ENCODE measurements at regions of chr13 and their contacts with region 1.

Region 1: DNA sequence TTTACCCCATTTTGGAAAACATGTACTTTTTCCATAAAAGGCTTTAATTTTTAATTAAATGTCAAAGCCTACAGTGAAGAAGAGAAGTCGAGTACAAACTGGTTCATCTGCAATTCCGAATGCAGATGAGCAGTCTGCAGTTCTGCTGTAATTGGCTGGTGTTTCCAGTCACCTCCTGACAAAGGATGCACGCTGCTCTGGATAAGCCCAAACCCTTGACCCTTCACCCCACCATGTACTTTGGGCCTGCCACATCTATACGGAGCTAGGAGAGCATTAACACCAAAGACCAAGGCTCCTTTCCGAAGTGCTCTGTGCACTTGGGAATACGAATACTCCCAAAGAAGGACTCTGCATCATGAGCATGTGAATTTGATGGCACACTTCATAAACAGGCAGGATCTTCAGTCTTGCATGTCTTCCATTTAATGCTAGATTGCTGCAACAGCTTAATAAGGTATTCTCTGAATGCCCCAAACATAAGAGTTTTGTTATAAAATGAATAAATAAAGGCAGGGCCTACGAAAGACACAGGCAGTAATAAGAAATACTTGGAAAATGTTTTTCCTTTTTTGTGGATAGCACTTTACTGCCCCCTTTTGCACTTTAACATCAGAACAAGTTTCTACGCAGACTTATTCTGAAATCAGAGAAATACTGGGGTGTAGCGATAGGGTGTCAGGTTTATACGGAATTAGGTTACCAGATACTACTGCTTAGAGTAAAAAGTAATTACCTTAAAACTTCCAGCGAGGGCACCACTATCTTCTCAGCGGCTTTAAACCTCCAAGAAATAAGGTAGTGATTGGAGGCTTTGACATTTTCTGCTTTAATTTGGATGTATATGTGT is 15.0 kb downstream of the EFNB2 start:
- DNase-seq: no peak
- H3K4me3 ChIP-seq: no peak overlapping the region
- H3K27ac ChIP-seq: no peak overlapping the region
- H3K4me1 ChIP-seq: no peaks in the 10 kb centered on the region
- H3K27me3 ChIP-seq: no peaks in the 10 kb centered on the region
- CTCF ChIP-seq: peak in 2 of 4 experiments; percentile 21 to 50
- POLR2A ChIP-seq: no peak

Region 2: DNA sequence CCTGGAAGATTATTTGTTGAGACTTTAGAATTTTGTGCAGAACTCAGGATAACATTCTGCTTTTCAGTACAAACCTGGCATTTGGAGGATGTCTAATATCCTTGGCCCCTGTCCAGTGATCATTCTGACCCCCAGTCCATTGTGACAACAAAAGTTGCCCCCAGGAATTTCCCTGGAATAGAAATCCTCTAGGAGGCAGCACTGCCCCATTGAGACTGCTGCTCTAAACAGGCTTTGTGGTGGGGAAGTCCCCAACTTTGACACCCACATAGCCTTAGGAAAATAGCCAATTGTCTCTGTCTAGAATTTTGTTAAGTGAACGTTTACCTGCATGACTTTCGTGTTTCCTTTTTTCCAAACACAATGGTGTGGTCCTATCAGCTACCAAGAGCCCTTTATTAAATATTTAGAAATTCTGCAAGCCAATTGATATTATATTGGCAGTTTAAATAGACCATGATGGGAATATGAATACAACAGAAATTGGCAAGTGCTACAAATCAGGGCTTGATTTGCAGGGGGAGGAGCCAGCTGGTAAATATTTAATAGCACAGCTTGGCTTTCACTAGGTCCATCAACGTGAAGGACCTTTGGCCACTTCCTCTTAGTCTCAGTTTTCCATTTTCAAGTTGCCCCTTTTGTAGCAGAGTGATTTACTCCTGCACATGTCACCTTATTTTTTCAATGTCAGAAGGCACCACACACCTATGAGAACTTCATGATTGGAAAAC is 436.6 kb before region 1 on chr13:
- intact Hi-C with region 1: loop called (anchors 5 kb)
- DNase-seq: peak; percentile 18
- H3K4me3 ChIP-seq: no peak overlapping the region
- H3K27ac ChIP-seq: no peak overlapping the region
- H3K4me1 ChIP-seq: no peaks in the 10 kb centered on the region
- H3K27me3 ChIP-seq: no peaks in the 10 kb centered on the region
- CTCF ChIP-seq: peak in 3 of 4 experiments; percentile 30 to 68 (median 55)
- POLR2A ChIP-seq: no peak

Region 3: GRCh38 chr13:108483981-108484380 is 1963.6 kb after region 1 on chr13:
- intact Hi-C with region 1: no loop called
- DNase-seq: no peak
- H3K4me3 ChIP-seq: no peak overlapping the region
- H3K27ac ChIP-seq: no peak overlapping the region
- H3K4me1 ChIP-seq: no peaks in the 10 kb centered on the region
- H3K27me3 ChIP-seq: no peaks in the 10 kb centered on the region
- CTCF ChIP-seq: no peak
- POLR2A ChIP-seq: no peak